Activated T-helper 2 cell treated with anti-CD3 and anti-CD28 coated beads, Interferon-gamma antibody, Interleukin-2, Interleukin-4, amounts not matched to agents 10 μg/mL and 5 μg/mL and 100 μg/mL, durations not matched to agents 14 hours and 24 hours and 36 hours (primary cell): ENCODE measurements at regions of chr6 and their contacts with region 1.

Region 1: GRCh38 chr6:142946181-142946923 is 1.4 kb upstream of the HIVEP2 start:
- DNase-seq: peak; percentile 74
- H3K4me3 Mint-ChIP-seq: peak overlapping the region; percentile 87
- H3K27ac Mint-ChIP-seq: peak overlapping the region; percentile 88
- H3K4me1 Mint-ChIP-seq: peaks cover 40% of the 10 kb centered on the region
- H3K27me3 Mint-ChIP-seq: peaks cover 15% of the 10 kb centered on the region

Region 2: DNA sequence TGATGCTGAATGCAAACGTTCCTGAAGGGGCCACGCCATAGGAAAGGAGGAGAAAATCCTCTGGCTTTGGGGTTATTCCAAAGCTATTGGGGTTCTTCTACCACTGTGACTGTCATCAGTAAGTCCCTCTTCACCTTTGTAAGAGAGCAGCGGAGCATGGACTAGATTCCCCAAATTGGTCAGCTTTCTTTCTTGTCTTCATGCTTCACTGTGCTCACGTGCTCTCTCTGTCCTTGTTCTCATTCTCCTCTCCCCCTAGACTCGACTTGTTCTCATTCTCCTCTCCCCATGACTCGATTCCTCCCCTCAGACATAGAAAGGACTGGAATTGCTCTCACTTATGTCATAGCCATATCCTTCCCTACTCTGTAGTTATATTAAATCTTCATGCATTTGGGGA is 699.4 kb before region 1 on chr6:
- intact Hi-C with region 1: no loop called
- DNase-seq: no peak
- H3K4me3 Mint-ChIP-seq: no peak overlapping the region
- H3K27ac Mint-ChIP-seq: no peak overlapping the region
- H3K4me1 Mint-ChIP-seq: no peaks in the 10 kb centered on the region
- H3K27me3 Mint-ChIP-seq: peaks cover 1% of the 10 kb centered on the region

Region 3: GRCh38 chr6:142756215-142756634 is 190.1 kb before region 1 on chr6:
- intact Hi-C with region 1: loop called (anchors 5 kb)
- DNase-seq: no peak
- H3K4me3 Mint-ChIP-seq: no peak overlapping the region
- H3K27ac Mint-ChIP-seq: no peak overlapping the region
- H3K4me1 Mint-ChIP-seq: peaks cover 18% of the 10 kb centered on the region
- H3K27me3 Mint-ChIP-seq: no peaks in the 10 kb centered on the region

Region 4: DNA sequence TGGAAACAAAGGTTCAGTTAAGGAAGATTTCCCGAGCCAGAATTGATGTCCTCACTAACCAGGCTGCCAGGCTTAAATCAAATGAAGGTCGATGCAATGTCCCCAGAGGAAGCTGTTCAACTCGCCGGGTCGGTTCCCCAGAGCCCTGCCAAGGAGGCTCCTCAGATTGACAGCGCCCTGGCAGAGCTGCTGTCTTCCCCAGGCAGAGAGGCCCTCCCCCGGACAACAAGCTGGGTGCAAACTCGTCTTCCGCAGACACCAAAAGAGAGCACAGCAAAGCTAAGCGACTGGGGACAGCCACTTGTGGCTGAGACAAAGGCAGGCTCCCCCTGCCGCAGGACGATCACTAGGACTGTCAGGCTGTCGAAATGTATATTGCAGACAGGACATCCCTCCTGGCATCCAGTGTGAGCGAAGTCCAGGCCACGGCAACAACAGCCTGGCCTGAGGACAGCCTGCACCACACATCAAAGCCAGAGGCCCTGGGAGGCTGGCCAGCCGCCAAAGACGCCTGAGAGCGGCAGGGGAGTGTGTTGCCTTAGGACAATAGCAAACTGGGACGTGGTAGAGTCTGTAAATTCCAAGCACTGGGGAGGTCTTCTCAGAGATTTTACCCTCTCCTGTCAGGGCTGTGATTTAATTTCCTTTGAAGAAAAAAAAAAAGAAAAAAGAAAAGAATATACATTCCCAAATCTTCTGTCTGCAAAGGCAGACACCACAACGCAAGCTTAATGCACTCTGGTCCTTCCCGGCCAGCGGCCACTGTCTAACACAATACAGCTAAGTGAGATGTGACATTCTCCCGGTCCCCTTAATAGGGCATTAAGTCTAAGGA is 100.5 kb before region 1 on chr6:
- intact Hi-C with region 1: loop called (anchors 1 kb)
- DNase-seq: peak; percentile 35
- H3K4me3 Mint-ChIP-seq: peak overlapping the region; percentile 60
- H3K27ac Mint-ChIP-seq: peak overlapping the region; percentile 62
- H3K4me1 Mint-ChIP-seq: peaks cover 89% of the 10 kb centered on the region
- H3K27me3 Mint-ChIP-seq: no peaks in the 10 kb centered on the region

Region 5: DNA sequence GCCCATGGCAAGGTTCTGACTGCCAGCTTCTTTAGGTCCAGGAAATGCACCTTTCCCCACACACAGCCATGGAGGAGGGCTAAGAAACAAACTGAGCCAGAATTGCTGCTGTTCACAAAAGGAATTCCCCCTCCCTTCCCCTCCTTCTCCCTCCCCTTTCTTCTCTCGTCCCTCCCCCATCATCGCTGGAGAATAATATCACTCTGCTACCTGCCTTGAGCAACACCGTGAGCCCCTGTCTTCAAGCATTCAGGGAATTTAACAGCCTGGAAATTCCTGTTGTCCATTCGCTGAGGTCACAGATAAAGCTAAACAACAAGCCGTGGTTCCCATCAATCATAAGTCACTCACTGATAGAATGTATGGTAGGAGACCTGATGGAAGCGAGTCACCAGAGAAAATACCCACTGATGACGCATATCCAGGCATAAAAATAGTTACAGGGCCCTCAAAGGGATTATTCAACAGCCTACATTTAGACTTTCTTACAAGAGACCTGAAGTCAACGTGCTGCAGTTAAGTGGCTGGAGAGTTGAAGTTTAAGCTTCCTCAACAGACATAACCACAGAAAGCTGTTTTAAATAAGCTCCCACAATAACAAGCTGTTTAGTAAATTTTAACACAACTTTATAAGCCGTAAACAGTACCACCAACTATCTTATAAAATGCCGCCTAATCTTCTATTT is 61.0 kb before region 1 on chr6:
- intact Hi-C with region 1: loop called (anchors 1 kb)
- DNase-seq: peak; percentile 26
- H3K4me3 Mint-ChIP-seq: peak overlapping the region; percentile 92
- H3K27ac Mint-ChIP-seq: peak overlapping the region; percentile 99
- H3K4me1 Mint-ChIP-seq: peaks cover 65% of the 10 kb centered on the region
- H3K27me3 Mint-ChIP-seq: no peaks in the 10 kb centered on the region

Region 6: GRCh38 chr6:142926494-142927270 is 19.7 kb before region 1 on chr6:
- intact Hi-C with region 1: loop called (anchors 1 kb)
- DNase-seq: peak; percentile 69
- H3K4me3 Mint-ChIP-seq: peak overlapping the region; percentile 91
- H3K27ac Mint-ChIP-seq: peak overlapping the region; percentile 90
- H3K4me1 Mint-ChIP-seq: peaks cover 43% of the 10 kb centered on the region
- H3K27me3 Mint-ChIP-seq: no peaks in the 10 kb centered on the region

Region 7: DNA sequence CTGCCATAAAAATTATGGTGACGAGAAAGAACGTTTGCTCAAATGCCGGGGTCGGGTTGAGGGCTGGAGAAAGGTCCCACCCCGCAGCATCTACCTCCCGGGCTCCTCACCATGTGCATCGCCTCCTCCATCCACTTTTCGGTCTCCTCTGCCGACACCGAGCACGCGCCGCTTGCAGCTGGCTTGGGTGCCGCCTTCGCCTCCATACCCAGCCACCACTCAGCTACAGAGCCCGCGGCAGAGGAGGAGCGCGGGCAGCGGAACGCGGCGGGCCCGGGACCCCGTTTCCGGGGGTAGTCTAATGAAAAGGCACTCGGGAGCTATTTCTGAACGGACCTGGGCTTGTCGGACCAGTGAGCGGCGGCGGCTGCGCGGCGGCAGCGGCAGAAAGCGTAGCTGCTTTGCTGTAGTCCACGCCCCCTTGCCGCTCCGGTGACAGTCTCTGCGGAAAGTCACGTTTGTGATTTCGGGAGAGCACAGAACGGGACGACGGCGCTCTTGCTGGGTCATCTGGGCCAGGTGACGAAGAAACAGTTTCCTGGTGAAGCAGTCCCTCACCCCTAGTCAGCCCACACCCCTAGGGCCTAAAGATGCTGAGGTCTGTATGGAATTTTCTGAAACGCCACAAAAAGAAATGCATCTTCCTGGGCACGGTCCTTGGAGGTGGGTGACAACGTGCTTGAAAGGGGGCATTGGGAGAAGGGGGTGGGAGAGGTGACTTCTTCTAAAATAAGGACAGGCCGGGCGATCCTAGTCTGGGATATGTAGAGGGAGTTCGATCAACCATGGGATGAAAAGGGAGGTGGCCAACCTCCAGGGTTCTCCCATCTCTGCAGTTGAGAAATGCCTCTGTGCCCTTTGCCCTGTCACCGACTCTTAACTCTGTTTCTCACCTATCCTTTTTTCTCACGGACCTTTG is 504.4 kb after region 1 on chr6 and contains the starts of genes ADAT2 and PEX3:
- intact Hi-C with region 1: loop called (anchors 1 kb)
- DNase-seq: peak; percentile 93
- H3K4me3 Mint-ChIP-seq: peak within 1 kb of the TSS; percentile 94
- H3K27ac Mint-ChIP-seq: peak within 1 kb of the TSS; percentile 97
- H3K4me1 Mint-ChIP-seq: peaks cover 36% of the 10 kb centered on the region
- H3K27me3 Mint-ChIP-seq: no peaks in the 10 kb centered on the region
- total RNA-seq, gene ADAT2: 35.7 and 37.6 TPM in 2 replicates
- total RNA-seq, gene PEX3: 21.4 and 23.6 TPM in 2 replicates

Region 8: GRCh38 chr6:143806282-143807102 is 860.1 kb after region 1 on chr6:
- intact Hi-C with region 1: loop called (anchors 10 kb)
- DNase-seq: peak; percentile 19
- H3K4me3 Mint-ChIP-seq: no peak overlapping the region
- H3K27ac Mint-ChIP-seq: peak overlapping the region; percentile 84
- H3K4me1 Mint-ChIP-seq: peaks cover 46% of the 10 kb centered on the region
- H3K27me3 Mint-ChIP-seq: no peaks in the 10 kb centered on the region